ENCODE measurements at regions of chr15 and their contacts with region 1.

Region 1: GRCh38 chr15:63891079-63891767 is 57.5 kb upstream of the HERC1 start:
- DNase-seq: peak; percentile 84
- ATAC-seq: peak; percentile 67
- H3K4me3 ChIP-seq: no peak overlapping the region
- H3K4me3 Mint-ChIP-seq: no peak overlapping the region
- H3K27ac ChIP-seq: no peak overlapping the region
- H3K27ac Mint-ChIP-seq: peak overlapping the region; percentile 37
- H3K4me1 ChIP-seq: peaks cover 30 to 35% of the 10 kb centered on the region in 2 donors
- H3K4me1 Mint-ChIP-seq: peaks cover 37% of the 10 kb centered on the region
- H3K27me3 ChIP-seq: no peaks in the 10 kb centered on the region
- H3K27me3 Mint-ChIP-seq: no peaks in the 10 kb centered on the region
- CTCF ChIP-seq: peak; percentile 95

Region 2: DNA sequence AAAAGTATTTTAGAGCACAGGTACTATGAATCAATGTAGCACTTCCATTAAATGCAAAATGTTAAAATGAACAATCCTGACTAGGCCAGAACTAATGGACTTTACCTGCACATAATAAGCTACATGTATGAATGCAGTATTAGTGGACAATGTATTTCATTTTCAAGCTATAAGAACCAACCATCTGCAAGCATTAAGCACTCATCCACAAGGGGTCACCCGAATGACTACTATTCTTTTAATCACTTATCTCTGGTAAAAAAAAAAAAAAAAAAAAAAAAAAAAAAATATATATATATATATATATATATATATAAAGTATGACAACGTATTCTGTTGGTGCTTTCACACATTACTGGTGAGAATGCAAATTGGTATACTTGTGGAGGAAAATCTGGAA is 64.7 kb before region 1 on chr15:
- CTCF ChIA-PET with region 1: interaction called, 11 read pairs
- POLR2A ChIA-PET with region 1: no interaction called
- intact Hi-C with region 1: loop called (anchors 1 kb)
- DNase-seq: peak; percentile 62
- ATAC-seq: peak; percentile 31
- H3K4me3 ChIP-seq: no peak overlapping the region
- H3K4me3 Mint-ChIP-seq: no peak overlapping the region
- H3K27ac ChIP-seq: no peak overlapping the region
- H3K27ac Mint-ChIP-seq: peak overlapping the region; percentile 73
- H3K4me1 ChIP-seq: peaks cover 4 to 13% of the 10 kb centered on the region in 2 donors
- H3K4me1 Mint-ChIP-seq: peaks cover 58% of the 10 kb centered on the region
- H3K27me3 ChIP-seq: no peaks in the 10 kb centered on the region
- H3K27me3 Mint-ChIP-seq: no peaks in the 10 kb centered on the region
- CTCF ChIP-seq: peak; percentile 56

Region 3: DNA sequence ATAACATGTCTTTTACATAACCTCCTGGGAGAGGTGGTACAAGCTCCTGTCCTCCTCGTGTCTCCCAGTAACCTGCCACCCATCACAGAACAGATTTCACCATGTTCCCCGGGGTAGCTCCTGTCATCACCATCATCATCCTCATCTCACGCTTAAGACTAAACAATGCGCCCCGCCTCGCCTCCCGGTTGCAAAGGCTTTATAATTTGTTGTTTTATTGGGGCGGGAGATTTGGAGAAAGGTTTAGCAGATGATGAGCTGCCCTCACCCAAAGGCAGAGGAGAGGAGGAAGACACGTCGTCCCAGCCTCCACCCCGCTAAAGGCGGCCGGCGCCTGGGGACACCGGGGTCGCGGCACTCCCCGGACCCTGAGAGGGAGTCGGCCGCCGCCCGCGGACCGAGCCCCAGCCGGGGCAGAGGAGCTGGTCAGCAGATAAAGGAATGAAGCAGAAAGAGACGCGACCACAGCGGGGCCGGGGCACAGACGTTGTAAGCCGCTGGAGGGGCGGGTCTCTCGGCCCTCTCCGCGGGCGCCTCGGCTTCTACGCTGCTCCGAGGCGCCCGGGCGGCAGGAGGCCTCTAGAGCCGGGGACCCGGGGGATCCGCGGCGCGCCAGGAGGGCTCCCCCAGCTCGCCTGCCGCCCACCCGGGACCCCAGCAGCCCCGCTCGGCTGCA is 58.1 kb before region 1 on chr15:
- CTCF ChIA-PET with region 1: interaction called, 12 read pairs
- POLR2A ChIA-PET with region 1: no interaction called
- intact Hi-C with region 1: no loop called
- DNase-seq: no peak
- ATAC-seq: peak; percentile 39
- H3K4me3 ChIP-seq: peak overlapping the region; percentile 83 to 95 (median 93)
- H3K4me3 Mint-ChIP-seq: peak overlapping the region; percentile 91
- H3K27ac ChIP-seq: peak overlapping the region; percentile 90
- H3K27ac Mint-ChIP-seq: peak overlapping the region; percentile 87
- H3K4me1 ChIP-seq: peaks cover 22 to 27% of the 10 kb centered on the region in 2 donors
- H3K4me1 Mint-ChIP-seq: peaks cover 39% of the 10 kb centered on the region
- H3K27me3 ChIP-seq: no peaks in the 10 kb centered on the region
- H3K27me3 Mint-ChIP-seq: no peaks in the 10 kb centered on the region
- CTCF ChIP-seq: no peak